A549 (cell line): ENCODE measurements at regions of chr2 and their contacts with region 1.

Region 1: DNA sequence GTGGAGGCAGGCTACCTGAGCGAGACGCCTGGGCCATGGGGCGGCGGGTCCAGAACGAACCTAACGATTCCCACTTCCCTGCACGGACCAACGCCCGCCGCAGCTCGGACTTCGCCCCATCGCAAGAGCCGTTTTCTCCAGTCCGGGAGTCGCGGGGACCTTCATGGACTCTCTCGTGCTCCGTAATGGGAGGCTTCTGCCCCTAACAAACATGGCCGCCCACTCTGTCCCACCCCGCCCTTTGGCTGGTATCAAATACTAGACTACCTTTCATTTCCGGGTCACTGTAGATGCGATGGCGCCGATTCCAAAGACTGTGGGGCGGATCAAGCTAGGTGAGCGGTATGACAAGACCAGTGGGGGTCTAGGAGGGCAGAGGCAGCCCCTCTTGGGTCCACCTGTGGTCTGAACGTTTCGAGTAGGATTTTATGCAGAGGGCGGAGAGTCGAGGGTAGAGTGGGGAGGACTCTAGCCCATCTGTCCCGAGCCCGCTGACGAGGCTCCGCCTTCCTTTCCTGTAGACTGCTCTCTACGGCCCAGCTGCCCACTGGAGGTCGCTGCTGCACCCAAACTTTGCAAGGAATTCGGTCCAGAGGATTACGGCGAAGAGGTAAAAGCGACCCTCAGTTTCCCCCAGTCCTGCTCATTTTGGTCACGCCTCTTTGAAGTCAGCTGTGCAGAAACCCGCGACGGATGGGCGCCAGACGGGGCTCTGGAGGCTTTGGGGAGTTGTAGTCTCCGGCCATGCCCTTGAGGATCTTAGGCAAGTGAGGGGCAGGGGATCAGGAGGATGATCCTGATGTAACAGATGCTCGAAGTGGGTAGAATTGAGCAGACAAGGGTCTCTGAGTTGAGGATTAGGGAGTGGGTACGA is at the starts of genes CCDC142 and TTC31:
- DNase-seq: peak; percentile 95 to 97
- ATAC-seq: peak; percentile 96 to 97
- H3K4me3 ChIP-seq: peak within 1 kb of the TSS; percentile 70
- H3K27ac ChIP-seq: peak within 1 kb of the TSS; percentile 85 to 97
- H3K4me1 ChIP-seq: peaks cover 20% of the 10 kb centered on the region
- CTCF ChIP-seq: peak; percentile 98
- EP300 ChIP-seq: no peak
- POLR2A ChIP-seq: peak; percentile 49
- RAD21 ChIP-seq: peak; percentile 76 to 86
- polyA plus RNA-seq, gene CCDC142: 6.8 and 8.9 TPM in 2 replicates
- polyA plus RNA-seq, gene TTC31: 29.6 and 32.4 TPM in 2 replicates

Region 2: DNA sequence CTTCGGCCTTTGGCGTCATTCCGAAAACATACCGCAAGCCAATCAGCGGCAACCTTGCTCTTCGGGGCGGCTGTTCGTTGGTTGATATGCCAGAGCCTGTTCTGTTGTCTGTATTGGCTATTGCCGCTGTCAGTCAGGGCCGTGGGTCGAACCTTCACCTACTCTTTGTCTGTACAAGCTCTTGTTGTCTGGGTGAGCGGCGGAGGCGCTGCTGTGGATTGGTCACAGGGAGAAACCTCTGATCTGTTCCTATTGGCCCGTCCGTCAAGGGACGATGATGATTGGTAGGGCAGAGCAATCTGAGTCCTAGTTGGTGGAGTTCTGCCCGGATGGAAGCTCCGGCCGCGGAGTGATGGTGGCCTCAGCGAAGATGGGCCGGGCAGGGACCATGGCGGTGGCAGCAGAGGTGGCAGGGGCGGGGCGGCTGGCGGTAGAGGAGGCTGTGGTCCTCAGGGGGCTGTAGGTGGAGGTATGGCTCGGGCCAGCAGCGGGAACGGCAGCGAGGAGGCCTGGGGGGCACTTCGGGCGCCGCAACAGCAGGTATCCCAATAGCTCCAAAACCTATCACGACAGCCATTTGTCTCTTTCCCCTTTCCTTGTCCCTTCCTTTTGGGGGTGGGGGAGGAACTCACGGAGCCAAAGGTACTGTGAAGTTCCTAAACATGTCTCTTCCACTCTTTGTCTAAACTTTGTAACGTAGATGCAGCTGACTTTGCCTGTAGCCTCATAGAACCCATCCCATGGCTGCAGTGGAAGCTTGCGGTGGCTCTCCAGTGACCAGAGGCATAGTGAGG is 24.7 kb before region 1 on chr2 and contains the start of gene WBP1:
- CTCF ChIA-PET with region 1: interaction called, 25 read pairs
- POLR2A ChIA-PET with region 1: interaction called, 15 read pairs
- DNase-seq: peak; percentile 99 to 100
- ATAC-seq: peak; percentile 80 to 92
- H3K4me3 ChIP-seq: peak within 1 kb of the TSS; percentile 70
- H3K27ac ChIP-seq: peak within 1 kb of the TSS; percentile 87 to 92
- H3K4me1 ChIP-seq: peaks cover 25% of the 10 kb centered on the region
- CTCF ChIP-seq: no peak
- EP300 ChIP-seq: no peak
- POLR2A ChIP-seq: peak; percentile 49
- RAD21 ChIP-seq: no peak
- polyA plus RNA-seq, gene WBP1: 62.6 and 86.3 TPM in 2 replicates

Region 3: GRCh38 chr2:74472086-74472944 is 10.7 kb before region 1 on chr2 and contains the start of gene MRPL53:
- CTCF ChIA-PET with region 1: interaction called, 37 read pairs
- POLR2A ChIA-PET with region 1: interaction called, 28 read pairs
- DNase-seq: peak; percentile 70 to 98
- ATAC-seq: peak; percentile 93 to 94
- H3K4me3 ChIP-seq: peak within 1 kb of the TSS; percentile 63
- H3K27ac ChIP-seq: peak within 1 kb of the TSS; percentile 86 to 91
- H3K4me1 ChIP-seq: peaks cover 16% of the 10 kb centered on the region
- CTCF ChIP-seq: no peak
- EP300 ChIP-seq: no peak
- POLR2A ChIP-seq: peak; percentile 94
- RAD21 ChIP-seq: no peak
- polyA plus RNA-seq, gene MRPL53: 49.9 and 68.8 TPM in 2 replicates

Region 4: DNA sequence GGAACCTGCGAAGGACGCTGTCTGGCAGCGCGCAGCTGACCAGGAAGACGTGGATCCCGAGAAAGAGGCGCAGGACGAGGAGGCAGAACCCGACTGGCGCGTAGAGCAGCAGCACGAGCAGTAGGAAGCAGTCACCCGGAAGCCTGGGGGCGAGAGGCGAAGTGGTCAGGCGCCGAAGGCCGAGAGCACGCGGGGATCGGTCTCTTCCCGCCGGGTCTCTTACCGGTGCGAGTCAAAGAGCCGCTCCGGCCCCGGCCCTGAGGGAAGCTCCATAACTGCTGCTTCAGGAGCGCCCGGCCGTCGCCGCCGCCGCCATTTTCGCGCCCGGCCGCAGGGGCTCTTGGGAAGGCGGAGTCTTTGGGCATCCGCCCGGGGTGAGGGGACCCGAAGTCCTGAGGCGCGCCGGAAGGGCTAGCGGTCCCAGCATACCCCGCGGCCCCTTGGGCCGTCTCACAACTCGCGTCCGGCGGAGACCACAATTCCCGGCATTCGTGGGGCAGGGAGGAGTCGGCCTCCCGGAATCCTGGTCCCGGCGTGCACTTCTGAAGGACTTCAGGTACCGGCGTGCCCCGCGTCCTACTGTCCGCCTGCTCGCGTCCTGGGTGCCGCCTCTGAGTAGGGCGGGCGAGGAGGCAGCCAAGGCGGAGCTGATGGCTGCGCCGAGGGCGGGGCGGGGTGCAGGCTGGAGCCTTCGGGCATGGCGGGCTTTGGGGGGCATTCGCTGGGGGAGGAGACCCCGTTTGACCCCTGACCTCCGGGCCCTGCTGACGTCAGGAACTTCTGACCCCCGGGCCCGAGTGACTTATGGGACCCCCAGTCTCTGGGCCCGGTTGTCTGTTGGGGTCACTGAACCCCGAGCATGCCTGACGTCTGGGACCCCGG is 46.6 kb after region 1 on chr2 and contains the starts of genes AUP1 and HTRA2:
- CTCF ChIA-PET with region 1: interaction called, 72 read pairs
- POLR2A ChIA-PET with region 1: interaction called, 11 read pairs
- DNase-seq: peak; percentile 99 to 100
- ATAC-seq: peak; percentile 91 to 97
- H3K4me3 ChIP-seq: peak within 1 kb of the TSS; percentile 57
- H3K27ac ChIP-seq: peak within 1 kb of the TSS; percentile 93 to 96
- H3K4me1 ChIP-seq: peaks cover 17% of the 10 kb centered on the region
- CTCF ChIP-seq: no peak; the same call in 2 of the 3 replicates
- EP300 ChIP-seq: no peak
- POLR2A ChIP-seq: peak; percentile 86
- RAD21 ChIP-seq: peak in 1 of 2 experiments; percentile 20; a peak in 1 of 5 replicates
- polyA plus RNA-seq, gene AUP1: 129 and 181 TPM in 2 replicates
- polyA plus RNA-seq, gene HTRA2: 28.7 and 33.7 TPM in 2 replicates

Region 5: DNA sequence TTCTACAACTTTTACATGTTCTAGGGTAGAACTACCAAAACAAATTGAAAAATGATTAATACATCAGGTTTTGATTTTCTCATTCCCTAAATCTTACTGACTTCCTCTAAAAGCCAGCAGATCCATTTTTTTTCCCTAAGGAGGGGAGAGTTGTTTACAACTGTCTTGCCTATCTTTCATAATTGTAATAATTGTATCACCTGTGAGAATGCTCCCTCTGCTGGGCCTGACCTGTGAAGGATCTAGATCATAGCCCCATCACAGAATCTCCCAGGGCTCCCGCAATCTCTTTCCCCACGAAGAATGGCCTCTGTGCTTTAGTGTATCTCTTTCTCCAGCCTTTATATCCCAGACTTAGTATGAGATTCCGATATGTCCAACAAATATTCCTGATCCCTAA is 61.6 kb after region 1 on chr2:
- CTCF ChIA-PET with region 1: interaction called, 28 read pairs
- POLR2A ChIA-PET with region 1: no interaction called
- DNase-seq: peak in 1 of 2 experiments; percentile 44
- ATAC-seq: peak in 1 of 2 experiments; percentile 35; a peak in 2 of 6 replicates
- H3K4me3 ChIP-seq: no peak overlapping the region
- H3K27ac ChIP-seq: no peak overlapping the region
- H3K4me1 ChIP-seq: peaks cover 9% of the 10 kb centered on the region
- CTCF ChIP-seq: peak; percentile 36
- EP300 ChIP-seq: no peak
- POLR2A ChIP-seq: no peak
- RAD21 ChIP-seq: peak in 1 of 2 experiments; percentile 24; a peak in 1 of 5 replicates

Region 6: DNA sequence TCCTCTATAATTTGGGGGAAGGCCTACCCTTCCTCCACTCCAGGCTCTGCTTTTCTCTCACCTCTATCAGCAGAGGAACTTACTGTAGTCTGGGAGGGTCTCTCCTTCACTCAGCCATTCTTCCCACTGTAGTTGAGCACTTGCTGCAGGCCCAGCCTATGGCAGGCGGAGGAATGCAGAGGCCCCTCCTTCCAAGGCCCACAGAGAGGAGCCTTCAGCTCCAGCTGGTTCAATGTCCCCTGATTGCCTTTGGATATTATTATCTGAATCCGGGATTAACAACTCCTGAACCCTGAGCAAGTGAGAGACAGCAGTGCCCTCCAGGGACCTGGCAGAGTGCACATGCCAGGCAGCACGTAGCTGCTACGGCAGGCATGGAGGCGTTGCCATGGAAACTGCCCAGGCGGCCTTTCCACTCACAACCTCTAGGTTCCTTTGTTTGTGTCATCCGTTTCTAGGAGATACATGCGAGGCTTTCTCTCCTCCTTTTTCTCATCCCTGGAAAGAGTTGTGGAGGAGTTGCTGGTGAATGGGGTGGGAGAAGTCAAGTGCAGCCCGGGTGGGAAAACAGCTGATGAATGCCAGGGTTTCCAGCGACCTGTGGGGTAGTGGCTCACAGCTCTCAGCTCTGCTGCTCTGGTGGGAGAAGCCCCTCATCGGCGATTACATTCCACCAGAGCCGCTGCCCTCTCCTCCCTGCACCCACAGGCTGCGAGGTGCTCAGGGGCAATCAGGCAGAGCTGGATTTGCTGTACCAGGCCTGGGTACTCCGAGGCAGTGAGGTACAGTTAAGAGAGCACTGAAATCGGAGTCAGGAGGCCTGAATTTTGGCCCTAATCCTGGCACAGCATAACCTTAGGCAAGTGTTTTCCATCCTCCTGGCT is 295.6 kb after region 1 on chr2:
- CTCF ChIA-PET with region 1: no interaction called
- POLR2A ChIA-PET with region 1: no interaction called
- DNase-seq: peak in 1 of 2 experiments; percentile 50
- ATAC-seq: peak; percentile 72 to 79; a peak in 5 of 6 replicates
- H3K4me3 ChIP-seq: no peak overlapping the region
- H3K27ac ChIP-seq: no peak overlapping the region
- H3K4me1 ChIP-seq: no peaks in the 10 kb centered on the region
- CTCF ChIP-seq: no peak
- EP300 ChIP-seq: no peak
- POLR2A ChIP-seq: no peak
- RAD21 ChIP-seq: no peak